ENCODE measurements at regions of chr1 and their contacts with region 1.

Region 1: DNA sequence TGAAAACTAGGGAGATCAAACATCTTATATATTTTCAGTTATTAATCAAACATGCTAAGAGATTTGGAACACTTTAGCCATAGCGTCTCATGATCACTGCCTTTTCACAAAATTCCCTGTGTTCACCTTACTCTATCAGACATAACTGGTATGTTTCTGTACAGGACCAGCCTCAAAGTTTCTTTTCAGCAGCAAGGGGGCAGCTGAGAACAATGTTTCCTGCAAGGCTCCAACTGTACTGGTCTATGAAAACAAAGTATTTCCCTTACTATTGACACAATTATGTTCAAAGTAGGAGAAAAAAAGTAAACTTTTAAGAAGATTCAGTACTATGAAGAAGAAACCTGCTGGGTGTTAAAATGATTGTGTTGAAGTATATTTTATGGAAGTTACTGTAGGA is 98.5 kb downstream of the ATF6 start:
- DNase-seq: no peak
- ATAC-seq: no peak
- H3K4me3 ChIP-seq: no peak overlapping the region
- H3K27ac ChIP-seq: no peak overlapping the region
- H3K4me1 ChIP-seq: no peaks in the 10 kb centered on the region
- H3K27me3 ChIP-seq: no peaks in the 10 kb centered on the region
- CTCF ChIP-seq: peak; percentile 35

Region 2: DNA sequence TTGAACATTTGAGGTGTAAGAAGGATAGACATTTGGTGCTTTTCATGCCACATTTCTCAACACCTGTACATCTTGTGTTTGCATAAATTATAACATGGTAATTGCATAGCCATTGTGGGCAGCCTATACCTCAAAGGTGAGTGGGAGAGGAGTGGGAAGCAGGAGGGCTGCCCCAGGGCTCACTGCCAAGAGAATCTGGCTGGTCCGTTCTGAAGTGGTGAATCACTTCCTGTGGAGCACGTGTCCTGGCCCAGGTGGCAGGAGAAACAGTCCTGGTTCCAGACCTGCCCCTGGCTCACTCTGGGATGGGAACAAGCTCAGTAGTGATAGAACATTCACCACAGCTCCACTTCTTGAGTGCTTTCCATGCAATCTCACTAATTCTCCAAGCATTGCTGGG is 170.7 kb after region 1 on chr1:
- intact Hi-C with region 1: loop called in 1 of 2 experiments (anchors 5 kb)
- DNase-seq: no peak
- ATAC-seq: no peak
- H3K4me3 ChIP-seq: no peak overlapping the region
- H3K27ac ChIP-seq: no peak overlapping the region
- H3K4me1 ChIP-seq: peaks cover 8% of the 10 kb centered on the region
- H3K27me3 ChIP-seq: no peaks in the 10 kb centered on the region
- CTCF ChIP-seq: no peak

Measured in psoas muscle (tissue), 8 donors.